Gastrocnemius medialis (tissue), 4 donors: ENCODE measurements at regions of chr5 and their contacts with region 1.

Region 1: GRCh38 chr5:66828548-66829357 is 232.6 kb downstream of the MAST4 start:
- DNase-seq: peak; percentile 37 to 39
- ATAC-seq: peak; percentile 87 to 89
- H3K4me3 ChIP-seq: peak overlapping the region; percentile 31 to 61 (median 42)
- H3K27ac ChIP-seq: peak overlapping the region in 3 of 4 donors; percentile 0 to 41 (median 1)
- H3K4me1 ChIP-seq: peaks cover 5 to 6% of the 10 kb centered on the region in 2 donors
- H3K27me3 ChIP-seq: peaks cover 0 to 8% (median 0%) of the 10 kb centered on the region in 3 donors
- CTCF ChIP-seq: no peak
- POLR2A ChIP-seq: peak in 1 of 2 donors; percentile 35

Region 2: GRCh38 chr5:66958980-66959641 is 130.4 kb after region 1 on chr5:
- in situ Hi-C with region 1: no loop called
- intact Hi-C with region 1: loop called (anchors 10 kb)
- DNase-seq: peak in 1 of 2 donors; percentile 16
- ATAC-seq: peak; percentile 38 to 63
- H3K4me3 ChIP-seq: peak overlapping the region; percentile 43 to 61 (median 46)
- H3K27ac ChIP-seq: peak overlapping the region in 2 of 4 donors; percentile 13 to 47
- H3K4me1 ChIP-seq: peaks cover 0 to 17% of the 10 kb centered on the region in 2 donors
- H3K27me3 ChIP-seq: no peaks in the 10 kb centered on the region
- CTCF ChIP-seq: no peak
- POLR2A ChIP-seq: no peak